ENCODE measurements at regions of chr7 and their contacts with region 1.

Region 1: GRCh38 chr7:94449148-94449725 is 54.5 kb downstream of the COL1A2 start:
- DNase-seq: no peak
- ATAC-seq: no peak
- H3K4me3 Mint-ChIP-seq: no peak overlapping the region
- H3K27ac Mint-ChIP-seq: no peak overlapping the region
- H3K4me1 Mint-ChIP-seq: no peaks in the 10 kb centered on the region
- H3K27me3 Mint-ChIP-seq: peaks cover 10% of the 10 kb centered on the region
- CTCF ChIP-seq: no peak

Region 2: GRCh38 chr7:94492596-94492995 is 43.4 kb after region 1 on chr7:
- CTCF ChIA-PET with region 1: no interaction called
- POLR2A ChIA-PET with region 1: no interaction called
- intact Hi-C with region 1: no loop called
- DNase-seq: no peak
- ATAC-seq: no peak
- H3K4me3 Mint-ChIP-seq: no peak overlapping the region
- H3K27ac Mint-ChIP-seq: no peak overlapping the region
- H3K4me1 Mint-ChIP-seq: no peaks in the 10 kb centered on the region
- H3K27me3 Mint-ChIP-seq: peaks cover 25% of the 10 kb centered on the region
- CTCF ChIP-seq: no peak

Region 3: GRCh38 chr7:94907026-94907810 is 458.0 kb after region 1 on chr7 and contains the start of gene PPP1R9A:
- CTCF ChIA-PET with region 1: no interaction called
- POLR2A ChIA-PET with region 1: no interaction called
- intact Hi-C with region 1: loop called (anchors 10 kb)
- DNase-seq: no peak
- ATAC-seq: peak; percentile 28
- H3K4me3 Mint-ChIP-seq: peak within 1 kb of the TSS; percentile 71
- H3K27ac Mint-ChIP-seq: no peak within 1 kb of the TSS
- H3K4me1 Mint-ChIP-seq: peaks cover 15% of the 10 kb centered on the region
- H3K27me3 Mint-ChIP-seq: peaks cover 42% of the 10 kb centered on the region
- CTCF ChIP-seq: no peak
- total RNA-seq, gene PPP1R9A: 1.3 and 1.5 TPM in 2 replicates

Region 4: DNA sequence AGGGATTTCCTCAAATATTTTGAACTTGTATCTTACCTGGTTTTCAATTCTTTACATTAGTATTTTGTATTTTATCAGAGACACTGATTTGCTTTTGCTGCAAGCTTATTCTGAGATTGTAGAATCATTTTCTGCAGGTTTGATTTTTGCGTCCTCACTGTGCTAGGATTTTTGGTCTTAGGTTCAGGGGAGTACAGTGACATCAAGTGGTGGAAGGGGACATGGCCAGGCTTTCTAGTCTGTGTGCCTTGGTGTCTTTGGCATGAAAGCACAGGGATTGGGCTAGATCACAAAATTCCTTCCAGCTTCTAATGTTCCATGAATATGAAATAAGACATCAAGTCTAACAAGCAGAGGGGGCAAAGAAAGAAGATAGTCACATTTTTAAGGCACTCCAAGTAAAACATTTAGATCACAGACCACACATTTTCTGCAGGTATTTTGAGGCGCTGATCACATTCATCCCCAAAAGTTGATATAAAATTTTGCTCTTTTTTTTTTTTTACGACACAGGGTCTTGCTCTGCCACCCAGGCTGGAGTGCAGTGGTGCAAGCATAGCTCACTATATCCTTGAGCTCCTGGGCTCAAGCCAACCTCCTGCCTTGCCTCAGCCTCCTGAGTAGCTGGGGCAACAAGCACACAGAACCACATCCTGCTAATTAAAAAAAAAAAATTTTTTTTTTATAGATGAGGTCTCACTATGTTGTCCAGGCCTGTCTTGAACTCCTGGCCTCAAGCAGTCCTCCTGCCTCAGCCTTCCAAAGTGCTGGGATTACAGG is 750.7 kb after region 1 on chr7:
- CTCF ChIA-PET with region 1: interaction called, 4 read pairs
- POLR2A ChIA-PET with region 1: no interaction called
- intact Hi-C with region 1: loop called (anchors 1 kb)
- DNase-seq: no peak
- ATAC-seq: no peak
- H3K4me3 Mint-ChIP-seq: no peak overlapping the region
- H3K27ac Mint-ChIP-seq: no peak overlapping the region
- H3K4me1 Mint-ChIP-seq: no peaks in the 10 kb centered on the region
- H3K27me3 Mint-ChIP-seq: no peaks in the 10 kb centered on the region
- CTCF ChIP-seq: no peak

Region 5: DNA sequence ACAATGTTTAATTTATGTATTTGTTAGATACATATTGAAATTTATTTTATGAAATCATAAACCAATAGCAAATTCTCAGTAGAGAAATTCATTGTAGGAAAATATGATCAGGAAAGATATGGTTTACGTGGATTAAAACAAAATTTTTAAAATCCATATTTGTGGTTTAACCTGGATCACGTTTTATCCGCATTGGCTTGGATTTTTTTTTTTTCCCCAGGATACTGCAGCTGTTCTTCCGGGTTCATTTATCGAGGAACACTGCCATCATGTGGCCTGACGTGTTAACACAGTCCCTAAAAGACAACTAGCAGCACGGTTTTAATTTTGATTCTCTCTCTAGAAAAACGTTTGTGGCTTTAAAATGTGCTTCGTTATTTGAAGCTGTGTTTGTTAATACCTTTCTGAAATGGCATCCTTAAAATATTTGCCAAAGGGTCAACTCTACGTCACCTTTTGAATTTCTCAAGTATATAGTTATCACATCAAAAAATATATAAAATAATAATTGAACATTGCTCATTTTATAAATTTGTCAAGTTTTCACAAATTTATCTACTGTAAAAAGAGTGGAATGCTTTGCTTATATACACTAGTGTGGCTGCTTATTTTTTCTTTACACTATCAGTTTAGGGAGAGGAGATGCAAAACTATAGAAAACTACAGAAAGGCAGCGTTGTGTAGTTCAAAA is 1027.8 kb after region 1 on chr7:
- CTCF ChIA-PET with region 1: interaction called, 110 read pairs
- POLR2A ChIA-PET with region 1: interaction called, 3 read pairs
- intact Hi-C with region 1: loop called (anchors 1 kb)
- DNase-seq: no peak
- ATAC-seq: peak; percentile 77
- H3K4me3 Mint-ChIP-seq: no peak overlapping the region
- H3K27ac Mint-ChIP-seq: no peak overlapping the region
- H3K4me1 Mint-ChIP-seq: no peaks in the 10 kb centered on the region
- H3K27me3 Mint-ChIP-seq: peaks cover 4% of the 10 kb centered on the region
- CTCF ChIP-seq: peak; percentile 96

Measured in activated B cell treated with CpG ODN at 0.5 μM for 24 hours (primary cell).